Activated naive CD4-positive, alpha-beta T cell treated with anti-CD3 and anti-CD28 coated beads for 36 hours (primary cell): ENCODE measurements at regions of chr17 and their contacts with region 1.

Region 1: GRCh38 chr17:10226930-10227685 is 28.7 kb upstream of the GAS7 start:
- DNase-seq: peak; percentile 52
- H3K4me3 Mint-ChIP-seq: no peak overlapping the region
- H3K27ac Mint-ChIP-seq: no peak overlapping the region
- H3K4me1 Mint-ChIP-seq: no peaks in the 10 kb centered on the region
- H3K27me3 Mint-ChIP-seq: no peaks in the 10 kb centered on the region

Region 2: DNA sequence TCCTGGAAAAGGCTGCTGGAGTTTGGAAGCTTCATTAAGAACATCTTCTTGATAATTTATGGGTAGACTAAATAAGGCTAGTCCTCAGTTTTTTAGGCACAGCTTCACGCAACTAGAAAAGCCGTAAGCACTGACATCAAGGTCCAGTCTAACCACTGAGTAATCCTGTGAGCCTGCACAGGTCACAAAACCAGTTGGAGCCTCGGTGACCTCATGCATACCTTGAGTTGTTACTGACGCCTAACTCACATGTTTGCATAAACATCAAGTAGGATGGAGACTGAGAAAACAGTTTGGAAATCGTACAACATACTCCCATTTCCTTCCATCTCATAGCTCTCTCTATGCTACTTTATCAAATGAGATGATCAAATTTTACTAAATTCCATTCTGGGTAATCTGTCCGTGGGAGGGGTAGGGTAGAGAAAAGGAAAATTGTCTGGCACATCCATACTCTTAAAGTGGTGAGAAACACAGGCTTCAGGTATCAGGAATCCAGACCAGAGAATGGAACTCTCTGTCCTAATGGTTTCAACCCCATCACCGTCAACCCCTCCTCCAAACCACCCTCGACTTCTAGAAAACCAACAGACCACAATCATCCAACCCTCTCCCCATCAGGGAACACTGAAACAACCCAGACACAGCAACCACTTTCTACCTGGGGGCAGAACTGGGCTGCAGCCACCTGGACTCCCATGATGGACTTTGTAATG is 258.0 kb before region 1 on chr17:
- CTCF ChIA-PET with region 1: interaction called, 3 read pairs
- intact Hi-C with region 1: loop called (anchors 5 kb)
- DNase-seq: no peak
- H3K4me3 Mint-ChIP-seq: no peak overlapping the region
- H3K27ac Mint-ChIP-seq: no peak overlapping the region
- H3K4me1 Mint-ChIP-seq: no peaks in the 10 kb centered on the region
- H3K27me3 Mint-ChIP-seq: no peaks in the 10 kb centered on the region

Region 3: DNA sequence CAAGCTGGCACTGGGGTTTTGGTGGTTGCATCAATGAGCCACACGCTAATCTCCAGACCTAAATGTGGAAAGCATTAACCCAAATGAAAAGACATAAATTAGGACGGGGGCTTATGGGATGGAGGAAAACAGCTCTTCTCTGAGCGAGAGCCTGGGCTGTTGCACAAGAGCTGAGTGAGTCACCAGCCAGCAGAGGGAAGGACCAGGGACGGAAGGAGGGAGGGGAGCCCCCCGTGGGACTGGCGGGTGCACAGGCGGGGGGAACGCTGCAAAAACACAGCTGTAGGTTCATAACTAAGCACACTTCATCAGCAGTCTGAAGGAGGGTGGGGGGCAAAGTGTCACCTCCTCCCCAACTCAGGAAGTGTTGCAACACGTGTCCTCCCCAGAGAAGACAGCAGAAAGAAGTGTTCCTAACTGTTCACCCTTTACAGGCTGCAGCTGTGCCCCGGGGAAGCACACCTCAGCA is 112.0 kb before region 1 on chr17:
- CTCF ChIA-PET with region 1: no interaction called
- intact Hi-C with region 1: loop called (anchors 5 kb)
- DNase-seq: peak; percentile 75
- H3K4me3 Mint-ChIP-seq: no peak overlapping the region
- H3K27ac Mint-ChIP-seq: peak overlapping the region; percentile 25
- H3K4me1 Mint-ChIP-seq: peaks cover 24% of the 10 kb centered on the region
- H3K27me3 Mint-ChIP-seq: peaks cover 18% of the 10 kb centered on the region